Pancreas (tissue), 10 donors: ENCODE measurements at regions of chr5 and their contacts with region 1.

Region 1: GRCh38 chr5:34898258-34898895 is 16.9 kb downstream of the RAD1 start:
- DNase-seq: peak in 5 of 6 donors; percentile 49 to 75 (median 52)
- ATAC-seq: peak; percentile 88 to 99 (median 97)
- H3K4me3 ChIP-seq: no peak overlapping the region
- H3K27ac ChIP-seq: no peak overlapping the region
- H3K4me1 ChIP-seq: no peaks in the 10 kb centered on the region
- H3K27me3 ChIP-seq: no peaks in the 10 kb centered on the region
- CTCF ChIP-seq: peak; percentile 66 to 83 (median 75)

Region 2: DNA sequence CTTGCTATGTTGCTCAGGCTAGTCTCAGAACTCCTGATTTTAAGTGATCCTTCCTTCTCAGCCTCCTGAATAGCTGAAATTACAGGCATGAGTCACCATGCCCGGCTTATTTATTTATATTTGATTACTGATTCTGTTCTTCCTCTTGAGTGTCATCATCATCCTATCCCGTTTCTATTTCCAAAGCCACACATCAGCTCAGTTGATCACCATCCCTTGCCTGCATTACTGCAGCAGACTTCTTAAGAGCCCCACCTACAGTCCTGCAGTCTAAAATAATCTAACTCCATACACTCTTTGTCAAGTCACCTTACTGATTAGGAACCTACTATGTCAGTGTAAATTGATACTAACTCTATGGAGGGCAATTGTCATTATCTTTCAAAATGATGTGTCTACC is 381.1 kb before region 1 on chr5:
- intact Hi-C with region 1: loop called in 1 of 3 experiments (anchors 10 kb)
- DNase-seq: no peak
- ATAC-seq: no peak
- H3K4me3 ChIP-seq: no peak overlapping the region
- H3K27ac ChIP-seq: no peak overlapping the region
- H3K4me1 ChIP-seq: peaks cover 0 to 2% (median 0%) of the 10 kb centered on the region in 3 donors
- H3K27me3 ChIP-seq: no peaks in the 10 kb centered on the region
- CTCF ChIP-seq: no peak

Region 3: GRCh38 chr5:35246900-35247647 is 348.7 kb after region 1 on chr5:
- intact Hi-C with region 1: no loop called
- DNase-seq: peak; percentile 68 to 86 (median 75)
- ATAC-seq: peak; percentile 85 to 93 (median 88)
- H3K4me3 ChIP-seq: no peak overlapping the region
- H3K27ac ChIP-seq: peak overlapping the region; percentile 13 to 83 (median 68)
- H3K4me1 ChIP-seq: peaks cover 6 to 28% (median 20%) of the 10 kb centered on the region in 3 donors
- H3K27me3 ChIP-seq: no peaks in the 10 kb centered on the region
- CTCF ChIP-seq: peak in 2 of 4 donors; percentile 3 to 11